ENCODE measurements at regions of chr2 and their contacts with region 1.

Region 1: GRCh38 chr2:188207554-188207953 is 84.1 kb upstream of the GULP1 start:
- DNase-seq: no peak
- ATAC-seq: no peak
- H3K4me3 ChIP-seq: no peak overlapping the region
- H3K27ac ChIP-seq: no peak overlapping the region
- H3K4me1 ChIP-seq: no peaks in the 10 kb centered on the region
- H3K27me3 ChIP-seq: no peaks in the 10 kb centered on the region
- CTCF ChIP-seq: no peak

Region 2: DNA sequence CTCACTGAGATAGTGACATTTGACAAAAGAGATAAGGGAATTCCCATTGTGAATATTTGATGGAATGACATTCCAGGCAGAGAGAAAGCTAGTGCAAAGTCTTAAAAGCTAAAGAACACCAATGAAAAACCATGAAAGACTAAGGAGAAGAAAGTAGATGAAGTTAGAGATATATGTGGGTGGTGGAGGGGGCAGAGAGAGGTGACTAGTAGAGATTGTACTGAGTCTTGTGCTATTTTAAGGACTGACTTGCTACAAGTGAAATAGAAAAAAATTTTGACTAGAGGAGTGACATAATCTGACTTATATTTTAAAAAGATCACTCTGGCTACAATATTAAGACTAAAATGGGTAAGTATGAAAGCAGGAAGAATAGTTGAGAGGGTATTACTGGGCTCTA is 48.9 kb after region 1 on chr2:
- intact Hi-C with region 1: loop called in 1 of 2 experiments (anchors 1 kb)
- DNase-seq: no peak
- ATAC-seq: no peak
- H3K4me3 ChIP-seq: no peak overlapping the region
- H3K27ac ChIP-seq: no peak overlapping the region
- H3K4me1 ChIP-seq: no peaks in the 10 kb centered on the region
- H3K27me3 ChIP-seq: no peaks in the 10 kb centered on the region
- CTCF ChIP-seq: no peak

Measured in psoas muscle (tissue), 8 donors.